SK-N-SH (cell line): ENCODE measurements at regions of chr11 and their contacts with region 1.

Region 1: DNA sequence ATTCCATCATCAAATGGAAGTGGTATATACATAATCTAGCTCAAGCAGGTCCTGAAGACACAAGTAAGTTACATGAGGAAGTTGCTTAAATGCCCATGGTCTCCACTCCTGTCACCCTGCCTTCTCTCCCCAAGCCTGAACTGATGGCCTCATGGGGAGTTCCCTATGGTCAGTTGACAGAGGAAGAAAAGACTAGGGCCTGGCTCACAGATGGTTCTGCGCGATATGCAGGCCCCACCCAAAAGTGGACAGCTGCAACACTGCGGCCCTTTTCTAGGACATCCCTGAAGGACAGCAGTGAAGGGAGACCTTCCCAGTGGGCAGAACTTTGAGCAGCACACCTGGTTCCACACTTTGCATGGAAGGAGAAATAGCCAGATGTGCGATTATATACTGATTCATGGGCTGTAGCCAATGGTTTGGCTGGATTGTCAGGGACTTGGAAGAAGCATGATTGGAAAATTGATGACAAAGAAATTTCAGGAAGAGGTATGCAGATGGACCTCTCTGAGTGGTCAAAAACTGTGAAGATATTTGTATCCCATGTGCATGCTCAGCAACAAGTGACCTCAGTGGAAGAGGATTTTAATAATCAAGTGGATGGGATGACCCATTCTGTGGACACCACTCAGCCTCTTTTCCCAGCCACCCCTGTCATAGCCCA is 17.3 kb upstream of the CD82 start:
- DNase-seq: no peak
- H3K4me3 ChIP-seq: no peak overlapping the region
- H3K27ac ChIP-seq: no peak overlapping the region
- H3K4me1 ChIP-seq: no peaks in the 10 kb centered on the region
- H3K27me3 ChIP-seq: no peaks in the 10 kb centered on the region
- CTCF ChIP-seq: no peak
- EP300 ChIP-seq: no peak
- RAD21 ChIP-seq: no peak

Region 2: DNA sequence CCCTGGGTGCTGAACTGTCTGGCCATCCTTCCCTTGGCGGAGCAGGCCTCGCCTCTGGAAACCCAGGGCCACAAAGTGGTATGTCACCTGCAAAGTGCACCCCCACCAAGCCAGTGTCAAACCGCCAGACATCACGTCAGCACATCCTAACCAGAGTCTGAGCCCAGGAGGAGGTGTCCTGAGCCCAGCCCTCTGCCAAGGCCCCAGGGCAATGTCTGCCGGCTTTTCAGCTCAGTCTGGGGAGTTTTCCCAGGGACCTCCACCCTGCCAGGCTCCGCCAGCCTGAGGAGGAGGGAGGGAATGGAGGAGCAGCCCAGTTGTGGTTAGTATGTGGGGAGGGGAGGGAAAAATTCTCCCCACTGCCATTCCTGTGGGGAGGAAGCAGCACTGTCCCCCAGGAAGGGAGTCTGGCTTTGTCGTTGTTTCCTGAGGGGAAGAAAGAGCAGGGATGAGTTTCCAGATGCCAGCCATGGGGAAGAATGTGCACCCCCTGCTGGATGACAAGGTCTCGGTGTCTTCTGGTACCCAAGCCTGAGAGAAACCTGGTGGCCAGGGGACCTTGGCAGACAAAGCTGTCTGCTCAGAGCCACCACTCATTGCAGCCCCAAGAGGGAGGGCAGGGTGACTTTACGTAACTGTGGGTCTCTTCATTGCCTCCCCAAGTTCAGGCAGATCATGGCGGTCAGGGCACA is 64.1 kb before region 1 on chr11:
- CTCF ChIA-PET with region 1: no interaction called
- POLR2A ChIA-PET with region 1: no interaction called
- DNase-seq: peak; percentile 68
- H3K4me3 ChIP-seq: no peak overlapping the region; a peak in 1 of 4 replicates
- H3K27ac ChIP-seq: no peak overlapping the region
- H3K4me1 ChIP-seq: peaks cover 0 to 9% of the 10 kb centered on the region in 2 experiments; a peak in 1 of 4 replicates
- H3K27me3 ChIP-seq: no peaks in the 10 kb centered on the region; the same call in 1 of the 2 replicates
- CTCF ChIP-seq: peak; percentile 45
- EP300 ChIP-seq: no peak
- RAD21 ChIP-seq: peak; percentile 63

Region 3: DNA sequence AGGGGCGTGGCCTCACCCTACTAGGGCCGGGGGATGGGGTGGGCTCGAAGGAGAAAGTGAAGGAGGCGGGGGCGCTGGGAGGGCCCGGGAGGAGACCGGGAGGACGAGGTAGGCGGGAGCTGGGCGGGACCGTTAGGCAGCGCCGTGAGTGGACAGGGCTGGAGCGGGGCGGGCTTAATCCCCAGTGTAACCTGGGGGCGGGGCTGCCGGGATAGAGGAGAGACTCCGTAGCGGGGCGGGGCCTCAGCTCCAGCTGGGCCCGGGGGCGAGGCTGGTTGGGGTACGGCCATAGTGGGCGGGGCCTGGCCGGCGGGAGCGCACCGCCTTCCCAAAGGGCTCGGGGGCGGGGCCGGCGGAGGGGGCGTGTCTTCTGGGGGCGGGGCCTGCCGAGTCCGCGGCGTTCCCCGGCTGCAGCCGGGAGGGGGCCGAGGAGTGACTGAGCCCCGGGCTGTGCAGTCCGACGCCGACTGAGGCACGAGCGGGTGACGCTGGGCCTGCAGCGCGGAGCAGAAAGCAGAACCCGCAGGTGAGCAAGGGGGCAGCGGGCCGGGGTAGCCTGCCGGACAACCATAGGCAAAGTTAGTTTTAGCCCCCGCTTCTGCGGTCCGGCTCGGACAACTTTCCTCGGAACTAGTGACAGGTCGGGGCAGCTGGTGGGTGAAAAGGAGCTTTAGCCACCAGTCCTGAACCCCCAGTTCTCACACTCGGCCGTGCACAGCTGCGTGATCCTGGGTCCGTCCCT is 17.2 kb after region 1 on chr11 and contains the start of gene CD82:
- CTCF ChIA-PET with region 1: no interaction called
- POLR2A ChIA-PET with region 1: no interaction called
- DNase-seq: peak; percentile 99
- H3K4me3 ChIP-seq: peak within 1 kb of the TSS; percentile 58 to 71
- H3K27ac ChIP-seq: peak within 1 kb of the TSS; percentile 89
- H3K4me1 ChIP-seq: peaks cover 27 to 34% of the 10 kb centered on the region in 2 experiments
- H3K27me3 ChIP-seq: no peaks in the 10 kb centered on the region
- CTCF ChIP-seq: peak; percentile 22; the same call in 1 of the 2 replicates
- EP300 ChIP-seq: no peak
- RAD21 ChIP-seq: no peak
- polyA plus RNA-seq, gene CD82: 35.6 and 39.2 TPM in 2 replicates

Region 4: GRCh38 chr11:44611687-44612434 is 63.7 kb after region 1 on chr11:
- CTCF ChIA-PET with region 1: interaction called, 24 read pairs
- POLR2A ChIA-PET with region 1: no interaction called
- DNase-seq: no peak
- H3K4me3 ChIP-seq: no peak overlapping the region
- H3K27ac ChIP-seq: no peak overlapping the region
- H3K4me1 ChIP-seq: peaks cover 0 to 10% of the 10 kb centered on the region in 2 experiments; a peak in 1 of 4 replicates
- H3K27me3 ChIP-seq: no peaks in the 10 kb centered on the region
- CTCF ChIP-seq: no peak
- EP300 ChIP-seq: no peak
- RAD21 ChIP-seq: no peak